Activated CD8-positive, alpha-beta memory T cell treated with anti-CD3 and anti-CD28 coated beads, Interleukin-2, amount 10 ng/mL, durations not matched to agents 7 days and 5 days (primary cell): ENCODE measurements at regions of chr10 and their contacts with region 1.

Region 1: GRCh38 chr10:15209827-15210509 is 41.5 kb upstream of the NMT2 start:
- DNase-seq: peak; percentile 88
- ATAC-seq: peak; percentile 75
- H3K4me3 Mint-ChIP-seq: peak overlapping the region; percentile 15
- H3K27ac Mint-ChIP-seq: peak overlapping the region; percentile 52
- H3K4me1 Mint-ChIP-seq: peaks cover 44% of the 10 kb centered on the region
- H3K27me3 Mint-ChIP-seq: no peaks in the 10 kb centered on the region

Region 2: DNA sequence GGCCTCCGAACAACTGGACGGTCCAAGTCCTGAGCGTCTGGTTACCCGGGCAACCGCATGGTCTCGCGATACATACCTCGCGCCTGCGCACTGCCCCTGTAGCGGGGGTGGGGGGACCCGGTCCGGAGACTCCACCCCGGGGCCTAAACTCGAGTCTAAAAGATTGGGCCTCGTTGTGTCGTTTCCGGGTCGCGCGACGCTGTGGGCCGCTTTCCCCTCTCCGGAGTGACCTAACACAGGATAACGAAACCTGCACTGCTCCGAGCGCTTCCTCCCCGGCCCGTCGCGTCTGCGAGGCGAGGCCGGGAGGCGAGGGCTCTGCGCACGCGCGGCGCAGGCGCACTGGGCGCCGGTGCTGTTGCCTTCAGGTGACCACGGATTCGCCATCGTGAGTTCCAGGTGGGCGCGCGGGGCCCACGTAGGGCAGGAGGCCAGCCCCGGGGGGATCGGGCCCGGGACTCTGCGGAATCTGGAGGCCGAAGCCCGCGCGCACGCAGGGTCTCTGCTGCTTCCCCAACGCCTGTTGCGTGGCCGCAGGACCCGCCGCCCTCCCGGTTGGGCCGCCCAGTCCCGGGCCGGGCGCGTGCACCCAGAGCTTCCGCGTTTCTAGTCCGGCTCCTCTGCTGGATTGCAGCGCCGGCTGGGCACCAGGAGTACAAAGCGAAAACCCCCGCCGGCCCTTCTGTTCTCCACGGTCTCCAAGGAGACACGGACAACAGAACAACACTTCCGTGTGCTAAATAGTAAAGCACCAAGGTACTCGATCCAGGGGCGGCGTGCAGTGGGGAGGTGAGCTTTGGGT is 112.8 kb before region 1 on chr10 and contains the start of gene RPP38:
- CTCF ChIA-PET with region 1: no interaction called
- DNase-seq: peak; percentile 97
- ATAC-seq: peak; percentile 87
- H3K4me3 Mint-ChIP-seq: peak within 1 kb of the TSS; percentile 98
- H3K27ac Mint-ChIP-seq: peak within 1 kb of the TSS; percentile 97
- H3K4me1 Mint-ChIP-seq: peaks cover 31% of the 10 kb centered on the region
- H3K27me3 Mint-ChIP-seq: peaks cover 7% of the 10 kb centered on the region
- total RNA-seq, gene RPP38: 17.2 to 22.3 TPM

Region 3: DNA sequence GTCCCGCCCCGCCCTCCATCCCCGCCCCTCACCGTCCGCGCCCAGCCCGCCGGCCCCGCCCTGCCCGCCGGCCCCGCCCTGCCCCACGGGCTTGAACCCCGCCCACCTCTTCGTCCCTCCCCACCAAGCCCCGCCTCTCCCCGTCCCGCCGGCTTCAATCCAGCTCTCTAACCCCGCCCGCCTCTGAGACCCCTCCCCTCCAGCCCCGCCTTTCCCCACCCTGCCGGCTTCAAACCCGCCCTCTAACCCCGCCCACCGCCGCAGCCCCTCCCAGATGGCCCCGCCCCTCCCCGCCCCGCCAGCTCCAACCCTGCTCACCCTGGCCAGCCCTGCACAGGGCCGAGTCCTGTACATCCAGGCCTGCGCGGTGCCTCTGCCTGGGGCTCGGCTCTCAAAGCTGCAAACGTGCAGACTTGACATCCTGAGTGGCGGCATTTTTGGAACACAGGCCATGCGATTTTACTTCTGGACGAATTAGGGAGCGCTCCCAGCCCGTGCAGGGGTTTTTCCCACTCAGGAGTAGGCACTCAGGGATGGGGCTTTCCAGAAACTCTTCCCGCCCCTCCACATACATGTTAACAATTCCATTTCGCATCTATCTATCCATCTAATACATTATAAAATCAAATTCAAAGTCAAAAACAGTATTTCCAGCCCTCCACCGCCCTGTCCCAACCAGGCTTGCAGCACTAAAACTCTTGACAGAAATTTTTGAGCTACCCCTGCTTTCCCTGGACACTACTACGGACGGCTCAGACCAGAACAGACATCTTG is 41.0 kb before region 1 on chr10:
- CTCF ChIA-PET with region 1: interaction called, 13 read pairs
- DNase-seq: peak; percentile 98
- ATAC-seq: peak; percentile 73
- H3K4me3 Mint-ChIP-seq: peak overlapping the region; percentile 70
- H3K27ac Mint-ChIP-seq: peak overlapping the region; percentile 97
- H3K4me1 Mint-ChIP-seq: peaks cover 46% of the 10 kb centered on the region
- H3K27me3 Mint-ChIP-seq: no peaks in the 10 kb centered on the region

Region 4: DNA sequence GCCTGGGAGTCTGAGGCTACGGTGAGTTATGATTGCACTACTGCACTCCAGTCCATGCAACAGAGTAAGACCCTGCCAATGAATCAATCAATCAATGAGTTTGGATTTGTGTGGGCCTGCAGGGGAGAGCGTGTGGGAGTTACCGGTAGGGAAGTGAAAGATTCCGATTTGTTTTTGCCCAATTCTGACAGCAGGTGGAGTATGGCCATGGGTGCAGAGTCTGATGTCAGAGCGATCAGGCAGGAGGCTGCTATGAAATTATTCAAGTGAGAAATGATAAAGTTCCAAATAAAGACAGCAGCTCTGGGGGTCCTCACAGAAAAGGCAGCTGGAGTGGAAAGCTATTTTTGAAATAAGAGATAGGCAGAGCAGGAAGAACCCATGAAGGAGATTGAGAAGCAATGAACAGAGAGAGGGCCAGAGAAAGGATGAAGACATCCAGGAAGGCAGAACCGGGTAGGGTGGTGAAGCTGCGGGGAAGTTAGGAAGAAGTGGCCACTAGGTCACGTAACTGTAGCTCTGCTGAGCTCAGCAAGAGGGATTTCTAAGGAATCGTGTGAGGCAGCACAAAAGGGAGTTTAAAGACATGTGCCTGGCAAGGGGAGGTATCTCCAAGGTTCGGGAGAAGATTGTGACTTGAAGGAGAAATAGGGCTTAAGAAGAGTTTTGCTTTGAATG is 52.2 kb after region 1 on chr10:
- CTCF ChIA-PET with region 1: no interaction called
- DNase-seq: no peak
- ATAC-seq: no peak
- H3K4me3 Mint-ChIP-seq: no peak overlapping the region
- H3K27ac Mint-ChIP-seq: no peak overlapping the region
- H3K4me1 Mint-ChIP-seq: no peaks in the 10 kb centered on the region
- H3K27me3 Mint-ChIP-seq: no peaks in the 10 kb centered on the region